ENCODE measurements at regions of chr5 and their contacts with region 1.

Region 1: DNA sequence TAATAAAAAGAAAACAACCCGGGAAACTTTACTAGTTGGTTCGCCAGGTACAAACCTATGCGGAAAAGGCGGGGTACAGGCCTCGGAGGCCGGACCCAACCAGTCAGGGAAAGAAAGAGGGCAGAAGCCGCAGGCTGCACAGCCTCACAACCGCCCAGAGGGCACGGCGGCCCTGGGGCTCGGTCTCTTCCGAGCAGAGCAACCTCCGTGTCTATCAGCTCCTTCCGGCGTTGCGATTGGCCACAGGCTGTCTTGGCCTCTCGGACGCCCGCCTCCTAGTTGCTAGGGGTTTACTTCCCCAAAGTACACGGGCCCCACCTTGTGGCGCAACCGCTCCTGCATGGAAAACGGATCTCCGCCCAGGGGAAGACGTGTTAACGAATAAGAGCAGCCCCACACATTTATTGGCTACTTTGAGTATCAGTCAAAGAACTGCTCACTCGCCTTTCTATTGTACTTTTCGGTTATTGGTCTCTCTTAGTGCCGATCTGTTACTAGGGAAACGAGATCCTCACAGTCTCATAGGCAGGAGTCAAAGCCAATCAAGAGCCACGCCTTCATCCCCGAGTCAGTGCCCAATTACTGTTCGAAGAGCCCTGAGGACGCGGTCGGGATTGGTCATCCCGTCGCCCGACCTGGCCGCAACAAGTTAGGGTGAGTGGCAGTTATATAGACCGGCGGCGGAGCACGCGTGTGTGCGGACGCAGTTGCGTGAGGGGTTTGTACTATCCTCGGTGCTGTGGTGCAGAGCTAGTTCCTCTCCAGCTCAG is at the start of gene G3BP1:
- DNase-seq: peak; percentile 100
- H3K4me3 Mint-ChIP-seq: no peak within 1 kb of the TSS
- H3K27ac Mint-ChIP-seq: no peak within 1 kb of the TSS
- H3K4me1 Mint-ChIP-seq: peaks cover 13% of the 10 kb centered on the region
- H3K27me3 Mint-ChIP-seq: no peaks in the 10 kb centered on the region
- CTCF ChIP-seq: peak; percentile 67
- total RNA-seq, gene G3BP1: 279 and 282 TPM in 2 replicates

Region 2: GRCh38 chr5:151523335-151523734 is 248.1 kb before region 1 on chr5:
- CTCF ChIA-PET with region 1: no interaction called
- POLR2A ChIA-PET with region 1: interaction called, 3 read pairs
- intact Hi-C with region 1: loop called (anchors 1 kb)
- DNase-seq: peak; percentile 71
- H3K4me3 Mint-ChIP-seq: no peak overlapping the region
- H3K27ac Mint-ChIP-seq: no peak overlapping the region
- H3K4me1 Mint-ChIP-seq: peaks cover 2% of the 10 kb centered on the region
- H3K27me3 Mint-ChIP-seq: no peaks in the 10 kb centered on the region
- CTCF ChIP-seq: peak; percentile 84

Region 3: DNA sequence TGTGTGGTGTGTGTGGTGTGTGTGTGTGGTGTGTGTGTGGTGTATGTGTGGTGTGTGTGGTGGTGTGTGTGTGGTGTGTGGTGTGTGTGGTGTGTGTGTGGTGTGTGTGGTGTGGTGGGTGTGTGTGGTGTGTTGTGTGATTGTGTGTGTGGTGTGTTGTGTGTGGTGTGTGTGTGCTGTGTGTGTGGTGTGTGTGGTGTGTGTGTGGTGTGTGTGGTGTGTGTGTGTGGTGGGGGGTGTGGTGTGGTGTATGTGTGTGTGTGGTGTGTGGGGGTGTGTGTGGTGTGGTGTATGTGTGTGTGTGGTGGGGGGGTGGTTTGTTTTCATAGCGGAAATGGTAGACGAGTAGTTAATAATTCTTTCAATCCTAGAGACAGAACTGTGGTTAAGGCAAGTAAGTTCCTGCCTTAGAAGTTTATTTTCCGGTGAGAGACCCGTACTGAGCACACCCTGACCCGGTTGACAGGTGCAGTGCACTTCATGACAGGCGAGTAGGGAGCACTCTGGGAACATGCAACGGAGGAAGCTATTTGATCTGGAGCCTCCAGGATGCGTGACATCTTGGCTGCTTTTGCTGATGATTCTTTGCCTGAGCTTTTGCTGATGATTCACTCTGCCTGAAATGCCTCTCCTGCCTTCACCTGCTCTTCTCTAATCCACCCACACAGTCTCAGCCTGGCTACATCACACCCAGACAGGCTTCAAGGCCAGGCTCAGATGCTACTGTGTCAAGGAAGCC is 158.6 kb before region 1 on chr5:
- CTCF ChIA-PET with region 1: no interaction called
- POLR2A ChIA-PET with region 1: interaction called, 33 read pairs
- intact Hi-C with region 1: no loop called
- DNase-seq: peak; percentile 93
- H3K4me3 Mint-ChIP-seq: no peak overlapping the region
- H3K27ac Mint-ChIP-seq: peak overlapping the region; percentile 30
- H3K4me1 Mint-ChIP-seq: peaks cover 56% of the 10 kb centered on the region
- H3K27me3 Mint-ChIP-seq: no peaks in the 10 kb centered on the region
- CTCF ChIP-seq: no peak

Region 4: DNA sequence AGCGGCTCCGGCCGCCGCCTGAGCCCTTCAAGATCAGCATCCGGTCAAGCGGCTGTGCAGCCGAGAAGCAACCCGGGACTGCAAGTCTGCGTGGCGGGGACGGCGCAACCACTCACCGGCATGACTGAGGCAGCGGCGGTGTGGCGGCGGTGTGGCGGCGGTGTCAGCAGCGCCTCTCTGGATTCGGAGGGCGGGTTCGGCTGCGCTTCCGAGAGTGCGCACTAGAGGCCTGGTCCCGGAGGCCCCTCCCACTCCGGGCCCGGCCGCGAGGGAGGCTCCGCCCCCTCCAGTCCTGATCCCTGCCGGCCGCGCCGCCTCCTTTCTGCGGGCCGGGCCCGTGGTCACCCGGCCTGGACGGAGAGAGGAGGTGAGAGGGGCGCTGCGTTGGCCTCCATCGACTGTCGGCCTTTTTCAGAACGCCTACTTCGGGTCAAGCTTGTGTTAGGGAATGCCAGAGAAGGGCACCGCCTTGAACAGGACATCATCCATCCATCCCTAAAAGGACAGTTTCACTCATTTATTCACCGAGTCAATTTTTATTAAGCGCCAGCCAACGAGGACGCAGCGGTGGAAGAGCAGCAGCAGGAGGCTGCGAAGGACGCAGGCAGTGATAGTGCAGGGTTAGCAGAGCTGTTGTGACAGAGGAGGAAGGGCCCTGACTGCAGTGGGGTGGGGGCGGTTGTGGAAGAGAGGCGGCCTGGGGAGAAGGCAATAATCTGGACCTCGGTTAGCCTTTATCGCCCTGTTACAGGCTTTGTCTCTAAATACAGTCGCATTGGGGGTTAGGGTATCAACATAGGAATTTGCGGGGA is 12.8 kb before region 1 on chr5 and contains the start of gene ATOX1:
- CTCF ChIA-PET with region 1: interaction called, 47 read pairs
- POLR2A ChIA-PET with region 1: interaction called, 162 read pairs
- intact Hi-C with region 1: no loop called
- DNase-seq: peak; percentile 96
- H3K4me3 Mint-ChIP-seq: peak within 1 kb of the TSS; percentile 85
- H3K27ac Mint-ChIP-seq: peak within 1 kb of the TSS; percentile 90
- H3K4me1 Mint-ChIP-seq: peaks cover 29% of the 10 kb centered on the region
- H3K27me3 Mint-ChIP-seq: no peaks in the 10 kb centered on the region
- CTCF ChIP-seq: no peak
- total RNA-seq, gene ATOX1: 155 and 168 TPM in 2 replicates

Region 5: DNA sequence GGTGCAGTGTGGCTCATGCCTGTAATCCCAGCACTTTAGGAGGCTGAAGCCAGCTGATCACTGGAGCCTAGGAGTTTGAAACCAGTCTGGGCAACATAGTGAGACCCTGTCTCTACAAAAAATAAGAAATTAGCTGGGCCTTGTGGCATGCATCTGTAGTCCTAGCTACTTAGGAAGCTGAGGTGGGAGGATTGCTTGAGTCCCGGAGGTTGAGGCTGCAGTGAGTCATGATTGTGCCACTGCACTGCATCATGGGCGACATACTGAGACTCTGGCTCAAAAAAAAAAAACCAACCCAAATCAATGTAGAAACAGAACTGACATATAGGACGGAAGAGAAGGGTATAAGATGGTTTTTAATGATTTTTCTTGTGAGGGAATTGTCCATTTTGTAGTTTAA is 28.0 kb after region 1 on chr5:
- CTCF ChIA-PET with region 1: interaction called, 9 read pairs
- POLR2A ChIA-PET with region 1: interaction called, 20 read pairs
- intact Hi-C with region 1: no loop called
- DNase-seq: peak; percentile 63
- H3K4me3 Mint-ChIP-seq: no peak overlapping the region
- H3K27ac Mint-ChIP-seq: peak overlapping the region; percentile 28
- H3K4me1 Mint-ChIP-seq: peaks cover 16% of the 10 kb centered on the region
- H3K27me3 Mint-ChIP-seq: no peaks in the 10 kb centered on the region
- CTCF ChIP-seq: no peak

Region 6: DNA sequence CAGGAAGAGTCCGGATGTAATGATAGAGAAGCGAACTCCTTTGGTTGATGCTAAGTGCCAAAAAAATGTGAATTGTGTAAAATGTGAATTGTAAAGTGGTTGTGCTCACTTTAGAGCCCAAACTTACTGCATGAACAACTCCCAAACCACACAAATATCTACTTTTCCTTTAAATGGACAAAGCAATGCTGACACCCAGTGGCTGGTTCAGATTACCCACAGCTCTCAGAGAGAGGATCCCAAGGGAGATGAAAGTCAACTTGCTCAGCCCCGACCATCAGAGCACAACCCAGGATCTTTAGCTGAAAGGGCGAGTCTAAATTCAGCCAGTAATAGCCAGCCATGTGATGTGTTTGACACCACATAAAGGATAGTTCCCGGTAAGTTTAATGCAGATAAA is 500.0 kb after region 1 on chr5:
- CTCF ChIA-PET with region 1: no interaction called
- POLR2A ChIA-PET with region 1: no interaction called
- intact Hi-C with region 1: loop called (anchors 2 kb)
- DNase-seq: peak; percentile 59
- H3K4me3 Mint-ChIP-seq: no peak overlapping the region
- H3K27ac Mint-ChIP-seq: no peak overlapping the region
- H3K4me1 Mint-ChIP-seq: peaks cover 6% of the 10 kb centered on the region
- H3K27me3 Mint-ChIP-seq: peaks cover 24% of the 10 kb centered on the region
- CTCF ChIP-seq: peak; percentile 50